CD14-positive monocyte (primary cell): ENCODE measurements at regions of chr7 and their contacts with region 1.

Region 1: GRCh38 chr7:98907570-98907969 is 29.2 kb downstream of the TRRAP start:
- DNase-seq: no peak
- H3K4me3 ChIP-seq: no peak overlapping the region
- H3K4me3 Mint-ChIP-seq: no peak overlapping the region
- H3K27ac ChIP-seq: no peak overlapping the region
- H3K27ac Mint-ChIP-seq: peak overlapping the region in 2 of 7 donors; percentile 41 to 56
- H3K4me1 ChIP-seq: no peaks in the 10 kb centered on the region
- H3K4me1 Mint-ChIP-seq: no peaks in the 10 kb centered on the region
- H3K27me3 ChIP-seq: no peaks in the 10 kb centered on the region
- H3K27me3 Mint-ChIP-seq: no peaks in the 10 kb centered on the region
- CTCF ChIP-seq: no peak

Region 2: GRCh38 chr7:98968621-98969020 is 61.1 kb after region 1 on chr7:
- intact Hi-C with region 1: loop called (anchors 10 kb)
- DNase-seq: no peak
- H3K4me3 ChIP-seq: no peak overlapping the region
- H3K4me3 Mint-ChIP-seq: no peak overlapping the region
- H3K27ac ChIP-seq: no peak overlapping the region
- H3K27ac Mint-ChIP-seq: peak overlapping the region in 2 of 7 donors; percentile 14 to 62
- H3K4me1 ChIP-seq: no peaks in the 10 kb centered on the region
- H3K4me1 Mint-ChIP-seq: no peaks in the 10 kb centered on the region
- H3K27me3 ChIP-seq: no peaks in the 10 kb centered on the region
- H3K27me3 Mint-ChIP-seq: no peaks in the 10 kb centered on the region
- CTCF ChIP-seq: no peak

Region 3: GRCh38 chr7:98974906-98975816 is 67.6 kb after region 1 on chr7:
- intact Hi-C with region 1: loop called in 1 of 2 experiments (anchors 10 kb)
- DNase-seq: no peak
- H3K4me3 ChIP-seq: no peak overlapping the region
- H3K4me3 Mint-ChIP-seq: no peak overlapping the region
- H3K27ac ChIP-seq: no peak overlapping the region
- H3K27ac Mint-ChIP-seq: no peak overlapping the region
- H3K4me1 ChIP-seq: no peaks in the 10 kb centered on the region
- H3K4me1 Mint-ChIP-seq: no peaks in the 10 kb centered on the region
- H3K27me3 ChIP-seq: no peaks in the 10 kb centered on the region
- H3K27me3 Mint-ChIP-seq: no peaks in the 10 kb centered on the region
- CTCF ChIP-seq: no peak

Region 4: DNA sequence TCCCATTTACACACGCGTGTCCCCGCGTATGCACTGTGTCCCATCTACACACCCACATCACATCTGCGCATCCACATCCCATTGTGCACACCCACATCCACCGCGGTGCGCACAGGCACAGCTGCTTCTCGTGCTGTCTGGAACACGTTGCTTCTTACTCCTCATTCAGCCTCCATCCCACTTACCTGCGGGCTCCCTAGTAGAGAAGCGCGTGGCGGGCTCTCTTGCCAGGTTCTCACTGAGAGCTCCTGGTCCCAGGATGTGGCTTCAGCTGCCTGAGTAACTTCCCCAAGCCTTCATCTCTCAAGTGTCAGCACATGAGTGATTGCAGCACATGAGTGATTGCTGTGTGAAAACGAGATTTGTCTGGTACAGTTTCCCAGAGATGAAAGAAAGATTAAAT is 88.6 kb after region 1 on chr7:
- intact Hi-C with region 1: no loop called
- DNase-seq: no peak
- H3K4me3 ChIP-seq: no peak overlapping the region
- H3K4me3 Mint-ChIP-seq: no peak overlapping the region
- H3K27ac ChIP-seq: no peak overlapping the region
- H3K27ac Mint-ChIP-seq: peak overlapping the region in 1 of 7 donors; percentile 4
- H3K4me1 ChIP-seq: no peaks in the 10 kb centered on the region
- H3K4me1 Mint-ChIP-seq: no peaks in the 10 kb centered on the region
- H3K27me3 ChIP-seq: no peaks in the 10 kb centered on the region
- H3K27me3 Mint-ChIP-seq: peaks cover 0 to 2% (median 0%) of the 10 kb centered on the region in 3 donors
- CTCF ChIP-seq: no peak